ENCODE measurements at regions of chr15 and their contacts with region 1.

Region 1: GRCh38 chr15:77186594-77187011 is 115.7 kb upstream of the TSPAN3 start:
- DNase-seq: peak in 1 of 3 donors; percentile 16
- H3K4me3 ChIP-seq: no peak overlapping the region
- H3K4me3 Mint-ChIP-seq: no peak overlapping the region
- H3K27ac ChIP-seq: no peak overlapping the region
- H3K27ac Mint-ChIP-seq: peak overlapping the region in 2 of 7 donors; percentile 6 to 25
- H3K4me1 ChIP-seq: peaks cover 29 to 41% of the 10 kb centered on the region in 2 donors
- H3K4me1 Mint-ChIP-seq: peaks cover 45% of the 10 kb centered on the region
- H3K27me3 ChIP-seq: no peaks in the 10 kb centered on the region
- H3K27me3 Mint-ChIP-seq: peaks cover 2% of the 10 kb centered on the region in 3 donors
- CTCF ChIP-seq: peak; percentile 15

Region 2: GRCh38 chr15:76682259-76682658 is 504.3 kb before region 1 on chr15:
- intact Hi-C with region 1: no loop called
- DNase-seq: no peak
- H3K4me3 ChIP-seq: no peak overlapping the region
- H3K4me3 Mint-ChIP-seq: no peak overlapping the region
- H3K27ac ChIP-seq: no peak overlapping the region
- H3K27ac Mint-ChIP-seq: no peak overlapping the region
- H3K4me1 ChIP-seq: no peaks in the 10 kb centered on the region
- H3K4me1 Mint-ChIP-seq: no peaks in the 10 kb centered on the region
- H3K27me3 ChIP-seq: no peaks in the 10 kb centered on the region
- H3K27me3 Mint-ChIP-seq: peaks cover 0 to 1% (median 0%) of the 10 kb centered on the region in 3 donors
- CTCF ChIP-seq: no peak

Region 3: GRCh38 chr15:77070495-77071304 is 115.9 kb before region 1 on chr15 and contains the start of gene TSPAN3:
- intact Hi-C with region 1: loop called in 1 of 2 experiments (anchors 10 kb)
- DNase-seq: peak; percentile 84 to 90 (median 85)
- H3K4me3 ChIP-seq: peak within 1 kb of the TSS; percentile 42 to 86 (median 83)
- H3K4me3 Mint-ChIP-seq: peak within 1 kb of the TSS; percentile 82 to 89
- H3K27ac ChIP-seq: peak within 1 kb of the TSS; percentile 20 to 77
- H3K27ac Mint-ChIP-seq: peak within 1 kb of the TSS; percentile 46 to 84 (median 66)
- H3K4me1 ChIP-seq: peaks cover 37 to 39% of the 10 kb centered on the region in 2 donors
- H3K4me1 Mint-ChIP-seq: peaks cover 36% of the 10 kb centered on the region
- H3K27me3 ChIP-seq: no peaks in the 10 kb centered on the region
- H3K27me3 Mint-ChIP-seq: peaks cover 0 to 4% (median 2%) of the 10 kb centered on the region in 3 donors
- CTCF ChIP-seq: no peak
- polyA plus RNA-seq, gene TSPAN3: 26.0 to 68.0 (median 53.2) TPM

Region 4: DNA sequence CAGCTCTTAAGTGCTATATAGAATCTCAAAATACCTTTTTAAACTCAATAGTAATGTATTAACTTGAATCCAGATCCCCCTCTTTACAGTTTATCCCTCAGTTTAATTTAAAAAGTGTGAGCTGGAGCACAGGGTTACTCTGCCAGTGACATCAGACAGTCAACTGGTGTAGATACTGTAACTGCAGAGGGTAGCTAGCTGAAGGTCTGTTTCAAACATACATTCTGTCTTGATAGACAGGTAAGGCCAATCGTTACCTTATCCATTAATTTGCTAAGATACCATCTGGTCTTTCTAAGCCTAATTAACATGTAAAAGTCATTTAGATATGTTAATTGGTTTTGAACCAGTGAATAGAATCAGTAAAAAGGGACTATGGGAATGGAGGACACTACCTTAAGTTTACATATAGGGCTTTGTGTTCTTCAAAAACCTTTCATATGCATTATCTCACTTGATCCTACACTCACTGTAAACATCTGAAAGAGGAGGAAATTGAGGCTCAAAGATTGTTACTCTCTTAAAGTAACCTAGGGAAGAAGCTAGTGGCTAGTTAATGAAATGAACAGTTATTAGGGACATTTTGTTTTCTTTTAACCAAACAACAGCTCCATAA is 56.2 kb before region 1 on chr15:
- intact Hi-C with region 1: no loop called
- DNase-seq: no peak
- H3K4me3 ChIP-seq: no peak overlapping the region
- H3K4me3 Mint-ChIP-seq: no peak overlapping the region
- H3K27ac ChIP-seq: no peak overlapping the region
- H3K27ac Mint-ChIP-seq: no peak overlapping the region
- H3K4me1 ChIP-seq: no peaks in the 10 kb centered on the region
- H3K4me1 Mint-ChIP-seq: no peaks in the 10 kb centered on the region
- H3K27me3 ChIP-seq: no peaks in the 10 kb centered on the region
- H3K27me3 Mint-ChIP-seq: no peaks in the 10 kb centered on the region
- CTCF ChIP-seq: no peak

Region 5: DNA sequence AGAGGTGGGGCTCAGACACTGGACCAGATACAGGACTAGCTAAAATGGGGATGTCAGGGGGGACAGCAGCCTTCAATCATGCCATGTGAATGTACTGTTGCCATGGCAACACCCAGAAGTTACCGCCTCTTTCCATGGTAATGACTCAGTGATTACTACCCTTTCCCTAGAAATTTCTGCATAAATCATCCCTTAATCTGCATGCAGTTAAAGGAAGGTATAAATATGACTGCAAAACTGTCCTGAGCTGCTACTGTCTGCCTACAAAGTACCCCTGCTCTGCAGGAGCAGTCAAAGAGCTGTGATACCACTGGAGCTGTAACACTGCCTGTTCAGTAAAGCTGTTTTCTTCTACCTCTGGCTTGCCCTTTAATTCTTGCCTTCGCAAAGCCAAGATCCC is 65.1 kb after region 1 on chr15:
- intact Hi-C with region 1: no loop called
- DNase-seq: peak in 1 of 3 donors; percentile 16
- H3K4me3 ChIP-seq: no peak overlapping the region
- H3K4me3 Mint-ChIP-seq: no peak overlapping the region
- H3K27ac ChIP-seq: no peak overlapping the region
- H3K27ac Mint-ChIP-seq: peak overlapping the region in 1 of 7 donors; percentile 21
- H3K4me1 ChIP-seq: no peaks in the 10 kb centered on the region
- H3K4me1 Mint-ChIP-seq: no peaks in the 10 kb centered on the region
- H3K27me3 ChIP-seq: no peaks in the 10 kb centered on the region
- H3K27me3 Mint-ChIP-seq: peaks cover 0 to 2% (median 0%) of the 10 kb centered on the region in 3 donors
- CTCF ChIP-seq: no peak

Measured in CD14-positive monocyte (primary cell).